A673 (cell line): ENCODE measurements at regions of chr6 and their contacts with region 1.

Region 1: GRCh38 chr6:118249680-118250079 is 298.4 kb upstream of the PLN start:
- DNase-seq: peak; percentile 95
- H3K4me3 ChIP-seq: no peak overlapping the region
- H3K27ac ChIP-seq: peak overlapping the region; percentile 79
- H3K4me1 ChIP-seq: peaks cover 14% of the 10 kb centered on the region
- H3K27me3 ChIP-seq: no peaks in the 10 kb centered on the region
- CTCF ChIP-seq: no peak

Region 2: DNA sequence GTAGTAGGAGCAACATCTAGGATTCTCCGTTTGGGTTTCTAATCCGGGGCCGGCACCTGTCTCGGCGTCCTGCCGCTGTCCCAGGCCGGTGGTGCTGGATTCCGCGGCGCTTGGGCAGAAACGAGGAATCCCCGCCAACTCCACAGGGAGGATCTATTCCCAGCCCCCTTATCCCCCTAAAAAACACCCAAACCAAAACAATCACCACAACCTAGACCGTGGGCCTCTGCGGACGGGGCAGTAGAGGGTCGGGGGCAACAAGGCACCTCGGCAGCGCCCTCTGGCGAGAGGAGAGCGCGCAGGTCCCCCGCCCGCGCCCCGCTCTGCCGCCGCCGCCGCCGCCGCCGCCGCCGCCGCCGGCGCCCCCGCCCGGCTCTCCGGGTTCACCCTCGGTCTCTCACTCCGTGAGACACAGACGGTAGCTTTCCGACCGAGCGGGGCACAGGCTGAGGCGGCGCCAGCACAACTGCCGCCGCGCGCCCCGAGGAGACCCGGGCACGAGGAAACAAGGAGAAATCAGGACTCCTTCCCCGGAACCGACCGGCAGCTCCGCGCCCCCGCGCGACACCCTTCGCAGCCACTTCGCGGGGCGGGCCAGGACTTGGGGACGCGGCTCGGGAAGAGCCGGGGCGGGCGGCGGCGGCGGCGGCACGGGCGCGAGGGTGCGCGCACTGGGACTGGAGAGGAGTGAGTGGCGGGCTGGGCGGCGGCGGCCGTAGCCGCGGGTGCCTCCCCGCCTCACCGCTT is 342.7 kb before region 1 on chr6 and contains the start of gene SLC35F1:
- CTCF ChIA-PET with region 1: no interaction called
- POLR2A ChIA-PET with region 1: no interaction called
- intact Hi-C with region 1: loop called (anchors 5 kb)
- DNase-seq: peak; percentile 56
- H3K4me3 ChIP-seq: peak within 1 kb of the TSS; percentile 60
- H3K27ac ChIP-seq: no peak within 1 kb of the TSS
- H3K4me1 ChIP-seq: peaks cover 15% of the 10 kb centered on the region
- H3K27me3 ChIP-seq: peaks cover 68% of the 10 kb centered on the region
- CTCF ChIP-seq: peak; percentile 61
- total RNA-seq, gene SLC35F1: 5.3 and 8.3 TPM in 2 replicates

Region 3: GRCh38 chr6:118212451-118213173 is 37.1 kb before region 1 on chr6:
- CTCF ChIA-PET with region 1: no interaction called
- POLR2A ChIA-PET with region 1: no interaction called
- intact Hi-C with region 1: loop called (anchors 5 kb)
- DNase-seq: peak; percentile 63
- H3K4me3 ChIP-seq: no peak overlapping the region
- H3K27ac ChIP-seq: peak overlapping the region; percentile 57
- H3K4me1 ChIP-seq: peaks cover 21% of the 10 kb centered on the region
- H3K27me3 ChIP-seq: no peaks in the 10 kb centered on the region
- CTCF ChIP-seq: no peak

Region 4: DNA sequence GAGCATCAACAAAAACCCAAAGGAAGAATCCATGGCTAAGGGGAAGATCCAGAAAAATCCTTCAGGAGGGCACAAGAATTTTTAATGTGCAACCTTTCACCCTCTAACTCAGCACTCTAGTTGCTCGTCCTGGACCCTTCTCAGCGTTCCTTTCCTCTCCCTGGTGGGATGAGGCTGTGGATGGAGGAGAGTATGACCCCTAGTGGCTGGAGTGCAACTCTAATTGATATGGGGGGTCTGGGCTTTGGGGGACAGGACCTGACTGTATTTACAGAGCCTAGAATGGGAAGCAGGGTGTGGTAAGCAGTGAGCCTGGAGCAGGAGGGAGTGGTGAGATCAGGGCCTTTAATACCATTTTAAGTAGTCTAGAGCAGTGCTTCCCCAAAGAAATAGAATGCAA is 485.6 kb after region 1 on chr6:
- CTCF ChIA-PET with region 1: no interaction called
- POLR2A ChIA-PET with region 1: no interaction called
- intact Hi-C with region 1: no loop called
- DNase-seq: peak; percentile 37
- H3K4me3 ChIP-seq: no peak overlapping the region
- H3K27ac ChIP-seq: no peak overlapping the region
- H3K4me1 ChIP-seq: no peaks in the 10 kb centered on the region
- H3K27me3 ChIP-seq: no peaks in the 10 kb centered on the region
- CTCF ChIP-seq: peak; percentile 56